HepG2 (cell line): ENCODE measurements at regions of chr14 and their contacts with region 1.

Region 1: DNA sequence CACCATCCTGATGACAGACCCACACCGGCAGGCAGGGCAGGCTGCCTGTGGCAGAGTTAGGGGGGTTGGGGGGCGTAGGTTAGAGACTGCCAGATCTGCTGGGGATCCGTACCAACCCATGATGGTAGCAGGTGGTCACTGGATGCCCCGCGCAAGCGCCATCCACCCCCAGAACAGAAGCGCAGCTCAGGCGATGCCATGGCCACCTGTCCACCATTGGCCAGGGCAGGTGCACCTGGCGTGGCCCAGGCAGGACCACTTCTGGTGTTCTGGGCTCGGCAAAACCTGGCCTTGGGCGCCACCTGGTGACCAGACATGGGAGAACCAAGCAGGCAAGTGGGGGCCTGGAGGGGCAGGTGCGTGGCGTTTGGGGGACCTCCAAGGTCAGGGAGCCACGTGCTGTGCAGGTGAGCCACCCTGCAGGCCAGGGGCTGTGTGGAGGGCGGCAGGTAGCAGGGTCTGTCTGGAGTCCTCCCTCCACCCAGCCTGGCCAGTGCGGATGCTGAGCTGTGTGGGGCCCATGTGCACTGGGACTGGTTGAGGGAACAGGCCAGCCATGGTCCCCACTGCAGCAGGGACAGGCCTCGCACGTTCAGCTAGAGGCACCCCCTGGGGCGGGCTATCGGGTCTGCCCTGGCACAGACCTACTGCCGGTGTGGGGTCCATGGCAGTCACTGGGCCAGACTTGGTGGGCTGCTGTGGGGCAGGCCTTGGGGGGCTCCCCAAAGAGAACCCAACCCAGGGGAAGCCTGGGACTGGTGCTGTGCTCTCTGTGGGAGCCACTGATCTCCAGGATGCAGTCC is 15.6 kb downstream of the BAG5 start:
- DNase-seq: peak; percentile 44
- ATAC-seq: peak; percentile 45
- H3K4me3 ChIP-seq: no peak overlapping the region
- H3K27ac ChIP-seq: no peak overlapping the region
- H3K4me1 ChIP-seq: peaks cover 43% of the 10 kb centered on the region
- H3K27me3 ChIP-seq: peaks cover 2 to 7% of the 10 kb centered on the region in 2 experiments; a peak in 2 of 5 replicates
- CTCF ChIP-seq: peak; percentile 100
- EP300 ChIP-seq: no peak
- POLR2A ChIP-seq: no peak
- RAD21 ChIP-seq: peak; percentile 98

Region 2: DNA sequence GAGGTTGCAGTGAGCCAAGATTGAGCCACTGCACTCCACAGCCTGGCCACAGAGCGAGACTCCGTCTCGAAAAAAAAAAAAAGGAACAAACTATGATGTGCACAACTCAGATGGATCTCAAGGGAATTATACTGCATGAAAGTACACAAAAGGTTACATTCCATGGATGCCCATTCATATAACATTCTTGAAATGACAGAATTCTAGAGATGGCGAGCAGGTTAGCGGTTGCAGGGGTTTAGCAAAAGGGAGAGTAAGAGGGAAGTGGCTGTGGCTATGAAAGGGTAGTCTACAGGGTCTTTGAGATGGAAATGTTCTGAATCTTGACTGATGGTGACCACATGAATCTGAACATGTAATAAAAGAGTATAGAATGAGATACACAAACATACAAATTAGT is 73.9 kb before region 1 on chr14:
- CTCF ChIA-PET with region 1: no interaction called
- POLR2A ChIA-PET with region 1: no interaction called
- in situ Hi-C with region 1: no loop called
- intact Hi-C with region 1: no loop called
- DNase-seq: no peak
- ATAC-seq: no peak
- H3K4me3 ChIP-seq: no peak overlapping the region
- H3K27ac ChIP-seq: no peak overlapping the region
- H3K4me1 ChIP-seq: 0 out of 2 replicates have a peak, but pooled peaks cover 5% of the 10 kb centered on the region
- H3K27me3 ChIP-seq: no peaks in the 10 kb centered on the region
- CTCF ChIP-seq: no peak
- EP300 ChIP-seq: no peak
- POLR2A ChIP-seq: no peak
- RAD21 ChIP-seq: no peak

Region 3: GRCh38 chr14:103500148-103500990 is 46.5 kb before region 1 on chr14:
- CTCF ChIA-PET with region 1: interaction called, 31 read pairs
- POLR2A ChIA-PET with region 1: no interaction called
- in situ Hi-C with region 1: loop called (anchors 5 kb)
- intact Hi-C with region 1: loop called (anchors 1 kb)
- DNase-seq: peak; percentile 72
- ATAC-seq: peak; percentile 98
- H3K4me3 ChIP-seq: no peak overlapping the region
- H3K27ac ChIP-seq: no peak overlapping the region
- H3K4me1 ChIP-seq: peaks cover 8% of the 10 kb centered on the region
- H3K27me3 ChIP-seq: no peaks in the 10 kb centered on the region
- CTCF ChIP-seq: peak; percentile 93
- EP300 ChIP-seq: no peak
- POLR2A ChIP-seq: no peak
- RAD21 ChIP-seq: peak; percentile 79

Region 4: DNA sequence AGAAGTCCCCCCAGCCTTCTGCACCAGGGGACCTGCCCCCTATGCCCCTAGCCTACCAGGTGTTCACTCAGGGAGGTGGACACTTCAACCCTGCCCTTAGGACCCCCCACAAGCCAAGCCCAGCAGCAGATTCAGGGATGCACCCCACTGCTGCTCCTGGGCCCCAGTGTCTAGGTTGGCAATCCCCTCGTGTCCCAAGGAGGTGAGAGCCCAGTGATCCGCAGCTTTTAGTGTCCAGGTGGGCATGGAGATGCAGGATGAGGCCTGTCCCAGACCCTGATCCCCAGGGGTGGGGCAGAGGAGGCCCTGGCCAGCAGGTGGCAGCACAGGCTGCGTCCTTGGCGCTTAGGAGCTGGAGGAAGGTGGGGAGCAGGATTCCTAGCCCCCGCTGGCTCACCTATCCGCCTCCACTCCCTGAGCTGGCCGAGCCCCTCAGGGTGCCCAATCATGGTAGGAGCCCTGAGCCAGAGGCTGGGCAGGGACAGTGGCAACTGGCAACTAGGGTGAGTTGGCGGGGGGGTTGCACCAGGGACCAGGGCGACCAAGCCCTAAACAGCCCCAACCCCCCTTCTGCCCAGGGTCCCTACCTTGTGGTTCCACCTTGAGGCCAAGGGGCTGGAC is 28.3 kb before region 1 on chr14:
- CTCF ChIA-PET with region 1: interaction called, 38 read pairs
- POLR2A ChIA-PET with region 1: interaction called, 7 read pairs
- in situ Hi-C with region 1: no loop called
- intact Hi-C with region 1: loop called (anchors 1 kb)
- DNase-seq: peak; percentile 51
- ATAC-seq: peak; percentile 82
- H3K4me3 ChIP-seq: peak overlapping the region in 2 of 3 experiments; percentile 26 to 59; a peak in 4 of 6 replicates
- H3K27ac ChIP-seq: no peak overlapping the region
- H3K4me1 ChIP-seq: peaks cover 39% of the 10 kb centered on the region
- H3K27me3 ChIP-seq: no peaks in the 10 kb centered on the region
- CTCF ChIP-seq: peak; percentile 99
- EP300 ChIP-seq: no peak
- POLR2A ChIP-seq: 0 out of 4 replicates have a peak, but pooled peaks of 1 of the 2 experiments have one; percentile 34
- RAD21 ChIP-seq: peak; percentile 93